ENCODE measurements at regions of chr12 and their contacts with region 1.

Region 1: GRCh38 chr12:49130151-49131050 is 794 bp downstream of the TUBA1B start:
- DNase-seq: peak; percentile 95 to 98 (median 97)
- ATAC-seq: peak; percentile 86
- H3K4me3 ChIP-seq: peak overlapping the region; percentile 73
- H3K4me1 ChIP-seq: peaks cover 13% of the 10 kb centered on the region
- CTCF ChIP-seq: peak; percentile 86

Region 2: GRCh38 chr12:49188914-49189367 is 58.5 kb after region 1 on chr12 and contains the start of gene TUBA1A:
- intact Hi-C with region 1: loop called in 1 of 2 experiments (anchors 10 kb)
- DNase-seq: peak; percentile 78 to 95 (median 85)
- ATAC-seq: peak; percentile 92
- H3K4me3 ChIP-seq: peak within 1 kb of the TSS; percentile 51
- H3K4me1 ChIP-seq: peaks cover 4% of the 10 kb centered on the region
- CTCF ChIP-seq: no peak
- total RNA-seq, gene TUBA1A: 20.5 to 295 (median 64.4) TPM

Region 3: DNA sequence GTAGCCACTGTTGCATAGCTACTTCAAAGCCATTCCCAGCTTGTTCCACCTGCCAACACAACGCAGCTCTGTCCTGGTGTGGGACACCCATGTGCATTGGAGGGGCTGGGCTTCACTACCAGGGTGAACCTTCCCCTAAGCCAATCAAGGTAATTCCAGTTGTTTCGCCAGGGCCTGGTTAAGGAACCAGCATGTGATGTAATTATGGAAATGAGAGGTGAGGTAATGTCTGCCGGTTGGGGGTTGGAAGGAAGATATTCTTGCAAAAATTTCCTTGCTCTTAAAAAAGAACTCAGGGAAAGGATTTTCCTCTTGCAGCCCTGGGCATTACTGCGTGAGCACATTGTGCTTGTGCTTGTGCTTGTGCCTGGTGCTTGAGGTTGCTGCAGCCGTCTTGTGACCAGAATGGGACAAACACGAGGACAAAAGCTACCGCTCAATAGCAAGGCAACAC is 149.3 kb after region 1 on chr12:
- intact Hi-C with region 1: no loop called
- DNase-seq: peak in 1 of 3 donors; percentile 29
- ATAC-seq: peak; percentile 81
- H3K4me3 ChIP-seq: no peak overlapping the region
- H3K4me1 ChIP-seq: no peaks in the 10 kb centered on the region
- CTCF ChIP-seq: no peak

Measured in mucosa of descending colon (tissue), 3 donors.